Naive thymus-derived CD4-positive, alpha-beta T cell (primary cell): ENCODE measurements at regions of chrX and their contacts with region 1.

Region 1: DNA sequence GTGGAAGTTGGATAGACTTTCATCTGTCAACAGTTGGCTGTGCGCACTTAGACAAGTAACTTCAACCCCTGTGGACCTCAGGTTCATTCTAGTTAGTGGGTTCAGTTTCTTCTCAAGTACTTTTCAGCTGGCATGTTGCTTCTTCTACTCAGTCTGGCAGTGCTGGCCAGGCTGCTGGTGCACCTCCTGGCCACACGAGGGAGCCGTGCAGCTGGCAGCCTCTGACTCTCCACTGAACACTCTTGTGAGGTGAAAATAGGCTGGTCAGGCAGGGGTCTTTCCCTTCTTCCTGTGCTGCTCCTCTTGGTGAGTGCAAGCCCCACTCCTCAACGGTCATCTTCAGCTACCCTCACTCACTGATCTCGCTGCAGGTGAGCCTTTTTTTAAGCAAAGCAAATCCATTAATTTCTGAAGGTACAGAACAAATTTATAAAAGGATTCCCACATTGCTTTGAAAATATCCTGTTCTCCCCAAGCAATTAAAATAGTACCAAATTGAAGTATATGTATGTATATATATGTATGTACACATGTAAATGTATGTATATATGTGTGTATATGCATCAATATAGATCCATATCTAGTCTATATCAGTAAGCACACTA is 30.6 kb downstream of the LONRF3 start:
- DNase-seq: peak; percentile 12 to 51 (median 36)
- ATAC-seq: peak; percentile 87
- H3K4me3 ChIP-seq: no peak overlapping the region
- H3K4me3 Mint-ChIP-seq: no peak overlapping the region
- H3K27ac ChIP-seq: no peak overlapping the region
- H3K27ac Mint-ChIP-seq: peak overlapping the region in 2 of 9 donors; percentile 23 to 38
- H3K4me1 ChIP-seq: no peaks in the 10 kb centered on the region
- H3K4me1 Mint-ChIP-seq: peaks cover 0 to 41% (median 25%) of the 10 kb centered on the region in 7 donors
- H3K27me3 ChIP-seq: no peaks in the 10 kb centered on the region
- H3K27me3 Mint-ChIP-seq: no peaks in the 10 kb centered on the region

Region 2: DNA sequence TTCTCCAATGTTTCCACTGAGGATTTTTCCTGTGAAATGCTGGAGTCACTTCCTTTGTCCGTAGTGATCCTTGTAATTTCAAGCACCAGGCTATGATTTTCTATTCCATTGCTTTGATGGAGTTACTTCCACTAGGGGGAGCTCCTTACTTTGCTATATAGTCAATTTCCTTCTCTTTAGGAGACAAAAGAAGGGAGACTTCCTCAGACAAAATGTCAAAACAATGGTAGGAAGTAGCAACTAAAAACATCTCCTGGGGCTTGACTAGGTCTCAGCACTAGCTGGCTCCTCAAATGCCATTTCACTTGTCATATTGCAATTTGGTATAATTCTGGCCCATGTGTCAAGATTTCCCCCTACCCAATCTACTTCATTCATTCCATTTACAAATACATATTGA is 157.3 kb before region 1 on chrX:
- CTCF ChIA-PET with region 1: interaction called, 8 read pairs
- POLR2A ChIA-PET with region 1: no interaction called
- intact Hi-C with region 1: loop called (anchors 1 kb)
- DNase-seq: peak in 7 of 9 donors; percentile 22 to 61 (median 54)
- ATAC-seq: peak; percentile 60
- H3K4me3 ChIP-seq: no peak overlapping the region
- H3K4me3 Mint-ChIP-seq: no peak overlapping the region
- H3K27ac ChIP-seq: no peak overlapping the region
- H3K27ac Mint-ChIP-seq: no peak overlapping the region
- H3K4me1 ChIP-seq: no peaks in the 10 kb centered on the region
- H3K4me1 Mint-ChIP-seq: no peaks in the 10 kb centered on the region
- H3K27me3 ChIP-seq: no peaks in the 10 kb centered on the region
- H3K27me3 Mint-ChIP-seq: peaks cover 0 to 4% (median 2%) of the 10 kb centered on the region in 5 donors

Region 3: GRCh38 chrX:118961866-118962560 is 43.0 kb before region 1 on chrX:
- CTCF ChIA-PET with region 1: interaction called, 5 read pairs
- POLR2A ChIA-PET with region 1: interaction called, 6 read pairs
- intact Hi-C with region 1: loop called in 1 of 2 experiments (anchors 5 kb)
- DNase-seq: no peak
- ATAC-seq: no peak
- H3K4me3 ChIP-seq: no peak overlapping the region
- H3K4me3 Mint-ChIP-seq: no peak overlapping the region
- H3K27ac ChIP-seq: no peak overlapping the region
- H3K27ac Mint-ChIP-seq: no peak overlapping the region
- H3K4me1 ChIP-seq: no peaks in the 10 kb centered on the region
- H3K4me1 Mint-ChIP-seq: no peaks in the 10 kb centered on the region
- H3K27me3 ChIP-seq: no peaks in the 10 kb centered on the region
- H3K27me3 Mint-ChIP-seq: peaks cover 0 to 3% (median 0%) of the 10 kb centered on the region in 5 donors

Region 4: GRCh38 chrX:118974088-118974907 is 30.7 kb before region 1 on chrX and contains the start of gene LONRF3:
- CTCF ChIA-PET with region 1: interaction called, 8 read pairs
- POLR2A ChIA-PET with region 1: interaction called, 9 read pairs
- intact Hi-C with region 1: loop called in 1 of 2 experiments (anchors 1 kb)
- DNase-seq: peak; percentile 26 to 71 (median 56)
- ATAC-seq: peak; percentile 65
- H3K4me3 ChIP-seq: peak within 1 kb of the TSS; percentile 64
- H3K4me3 Mint-ChIP-seq: peak within 1 kb of the TSS; percentile 86 to 100 (median 92)
- H3K27ac ChIP-seq: peak within 1 kb of the TSS; percentile 74
- H3K27ac Mint-ChIP-seq: peak within 1 kb of the TSS; percentile 38 to 94 (median 90)
- H3K4me1 ChIP-seq: peaks cover 0 to 3% of the 10 kb centered on the region in 2 donors
- H3K4me1 Mint-ChIP-seq: peaks cover 0 to 24% (median 17%) of the 10 kb centered on the region in 7 donors
- H3K27me3 ChIP-seq: no peaks in the 10 kb centered on the region
- H3K27me3 Mint-ChIP-seq: peaks cover 0 to 57% (median 5%) of the 10 kb centered on the region in 5 donors
- total RNA-seq, gene LONRF3: 0.07 to 17.8 (median 11.5) TPM

Region 5: GRCh38 chrX:118990512-118991227 is 14.4 kb before region 1 on chrX:
- CTCF ChIA-PET with region 1: interaction called, 8 read pairs
- POLR2A ChIA-PET with region 1: interaction called, 10 read pairs
- intact Hi-C with region 1: loop called in 1 of 2 experiments (anchors 2 kb)
- DNase-seq: no peak
- ATAC-seq: no peak
- H3K4me3 ChIP-seq: no peak overlapping the region
- H3K4me3 Mint-ChIP-seq: no peak overlapping the region
- H3K27ac ChIP-seq: no peak overlapping the region
- H3K27ac Mint-ChIP-seq: peak overlapping the region in 6 of 9 donors; percentile 3 to 94 (median 78)
- H3K4me1 ChIP-seq: peaks cover 0 to 10% of the 10 kb centered on the region in 2 donors
- H3K4me1 Mint-ChIP-seq: peaks cover 7 to 45% (median 41%) of the 10 kb centered on the region in 7 donors
- H3K27me3 ChIP-seq: no peaks in the 10 kb centered on the region
- H3K27me3 Mint-ChIP-seq: no peaks in the 10 kb centered on the region

Region 6: GRCh38 chrX:119067023-119067739 is 62.2 kb after region 1 on chrX:
- CTCF ChIA-PET with region 1: interaction called, 3 read pairs
- POLR2A ChIA-PET with region 1: no interaction called
- intact Hi-C with region 1: loop called in 1 of 2 experiments (anchors 2 kb)
- DNase-seq: peak in 4 of 9 donors; percentile 2 to 19 (median 13)
- ATAC-seq: peak; percentile 80
- H3K4me3 ChIP-seq: no peak overlapping the region
- H3K4me3 Mint-ChIP-seq: no peak overlapping the region
- H3K27ac ChIP-seq: no peak overlapping the region
- H3K27ac Mint-ChIP-seq: no peak overlapping the region
- H3K4me1 ChIP-seq: no peaks in the 10 kb centered on the region
- H3K4me1 Mint-ChIP-seq: peaks cover 0 to 2% (median 0%) of the 10 kb centered on the region in 7 donors
- H3K27me3 ChIP-seq: no peaks in the 10 kb centered on the region
- H3K27me3 Mint-ChIP-seq: peaks cover 0 to 3% (median 0%) of the 10 kb centered on the region in 5 donors

Region 7: DNA sequence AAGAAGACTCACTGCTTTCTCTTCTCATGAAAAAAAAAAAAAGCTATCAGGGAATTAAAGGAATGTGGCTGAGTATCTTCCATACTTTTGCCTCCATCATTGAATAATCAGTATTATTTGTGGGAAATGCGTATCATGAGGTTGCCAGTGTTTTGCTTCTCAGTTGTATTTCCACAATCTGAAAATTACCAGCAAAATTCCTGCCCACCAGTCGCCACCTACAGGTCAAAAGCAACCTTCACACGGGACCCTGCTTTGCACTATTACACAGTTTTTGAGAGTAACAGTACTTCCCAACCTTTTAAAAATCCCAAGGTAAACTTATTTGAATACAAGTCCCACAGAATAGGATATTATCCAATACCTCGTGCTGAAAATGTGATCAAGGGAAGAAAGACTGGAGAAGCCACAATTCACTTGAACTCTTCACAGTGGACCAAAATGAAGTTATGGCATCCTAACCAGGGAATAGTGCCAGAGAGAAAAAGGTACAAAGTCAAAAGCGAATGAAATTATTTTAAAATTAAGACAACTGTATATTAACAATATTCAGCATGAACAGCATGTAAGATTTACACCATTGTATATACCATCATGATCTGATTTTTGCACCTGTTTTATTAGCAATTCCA is 261.5 kb after region 1 on chrX:
- CTCF ChIA-PET with region 1: no interaction called
- POLR2A ChIA-PET with region 1: no interaction called
- intact Hi-C with region 1: loop called (anchors 2 to 5 kb)
- DNase-seq: peak in 4 of 9 donors; percentile 5 to 27 (median 14)
- ATAC-seq: no peak
- H3K4me3 ChIP-seq: no peak overlapping the region
- H3K4me3 Mint-ChIP-seq: no peak overlapping the region
- H3K27ac ChIP-seq: no peak overlapping the region
- H3K27ac Mint-ChIP-seq: no peak overlapping the region
- H3K4me1 ChIP-seq: no peaks in the 10 kb centered on the region
- H3K4me1 Mint-ChIP-seq: no peaks in the 10 kb centered on the region
- H3K27me3 ChIP-seq: no peaks in the 10 kb centered on the region
- H3K27me3 Mint-ChIP-seq: peaks cover 0 to 29% (median 0%) of the 10 kb centered on the region in 5 donors